ENCODE measurements at regions of chr1 and their contacts with region 1.

Region 1: DNA sequence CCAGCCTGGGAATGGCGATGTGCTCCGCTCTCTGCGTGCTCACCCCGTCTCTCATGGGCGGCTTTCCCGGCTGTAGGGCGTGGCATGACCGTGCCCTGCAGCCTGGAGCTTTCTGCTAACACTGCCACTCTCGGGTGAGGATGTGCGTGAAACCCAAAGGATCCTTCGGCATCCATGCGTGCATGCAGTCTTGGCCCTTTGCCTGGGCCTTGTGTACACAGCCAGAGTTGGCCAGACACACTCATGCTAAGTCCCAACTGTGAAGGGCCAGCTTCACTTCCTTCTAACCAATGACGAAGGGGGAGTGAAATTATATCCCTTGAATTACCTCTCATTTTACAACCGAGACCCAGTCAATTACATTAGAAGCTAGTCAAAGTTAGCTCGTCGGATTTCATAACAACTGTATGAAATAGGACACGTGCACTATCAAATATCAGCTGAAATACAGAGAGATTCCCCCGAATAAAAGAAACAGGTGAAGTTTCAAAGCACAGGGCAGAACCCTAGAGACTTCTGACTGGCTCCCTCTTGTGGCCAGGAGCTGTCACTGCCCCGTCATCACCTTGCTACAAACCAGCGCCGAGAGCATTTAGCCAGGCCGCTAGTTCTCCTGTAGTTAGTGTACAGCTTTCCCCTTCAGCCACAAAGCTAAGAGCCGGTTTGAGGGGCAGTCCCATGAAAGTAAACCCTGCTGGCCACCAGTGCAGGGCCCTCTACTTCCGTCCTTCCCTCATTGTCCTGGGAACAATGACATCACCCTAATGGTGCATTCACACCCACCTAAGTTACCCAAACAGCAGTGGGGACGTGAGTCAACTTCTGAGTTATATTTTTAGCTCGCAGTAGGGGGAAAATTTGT is 63.4 kb upstream of the COA6 start:
- DNase-seq: peak; percentile 37 to 46
- ATAC-seq: peak; percentile 87 to 90
- H3K4me3 ChIP-seq: peak overlapping the region; percentile 2 to 30 (median 22)
- H3K27ac ChIP-seq: no peak overlapping the region
- H3K4me1 ChIP-seq: peaks cover 4 to 6% of the 10 kb centered on the region in 2 donors
- H3K27me3 ChIP-seq: no peaks in the 10 kb centered on the region
- CTCF ChIP-seq: peak; percentile 64 to 87 (median 83)
- POLR2A ChIP-seq: no peak

Region 2: DNA sequence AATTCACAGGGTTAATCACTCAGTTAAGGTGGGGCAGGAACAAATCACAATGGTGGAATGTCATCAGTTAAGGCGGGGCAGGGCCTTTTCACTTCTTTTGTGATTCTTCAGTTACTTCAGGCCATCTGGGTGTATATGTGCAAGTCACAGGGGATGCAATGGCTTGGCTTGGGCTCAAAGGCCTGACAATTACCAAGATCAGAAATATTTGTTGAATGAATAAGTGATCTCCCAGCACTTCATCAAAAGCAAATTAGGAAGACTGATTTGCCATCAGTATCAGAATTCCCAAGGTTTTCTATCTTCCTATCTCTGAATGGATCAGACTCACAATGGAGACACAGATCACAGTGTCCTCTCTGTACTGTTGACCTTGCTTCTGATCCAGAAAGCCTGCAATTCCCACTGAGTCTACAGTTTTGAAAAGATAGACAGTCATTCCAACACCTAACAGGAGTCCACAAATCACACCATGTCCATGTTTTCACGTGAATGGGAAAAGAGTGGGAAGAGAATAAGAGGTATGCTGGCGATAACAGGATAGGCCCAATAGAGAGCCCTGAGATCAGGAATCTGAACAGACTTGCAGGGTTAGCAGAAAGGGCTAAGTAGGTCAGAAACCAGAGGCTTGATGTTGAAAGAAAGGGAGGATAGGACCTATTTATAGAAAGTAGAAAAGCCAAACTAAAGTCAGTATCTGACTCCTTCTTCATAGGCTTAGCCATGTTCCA is 620.6 kb before region 1 on chr1:
- in situ Hi-C with region 1: no loop called
- intact Hi-C with region 1: no loop called
- DNase-seq: no peak
- ATAC-seq: no peak
- H3K4me3 ChIP-seq: no peak overlapping the region
- H3K27ac ChIP-seq: no peak overlapping the region
- H3K4me1 ChIP-seq: no peaks in the 10 kb centered on the region
- H3K27me3 ChIP-seq: no peaks in the 10 kb centered on the region
- CTCF ChIP-seq: no peak
- POLR2A ChIP-seq: no peak

Region 3: GRCh38 chr1:234114648-234115307 is 195.1 kb before region 1 on chr1:
- in situ Hi-C with region 1: no loop called
- intact Hi-C with region 1: loop called (anchors 1 kb)
- DNase-seq: no peak
- ATAC-seq: peak in 1 of 2 donors; percentile 68
- H3K4me3 ChIP-seq: no peak overlapping the region
- H3K27ac ChIP-seq: no peak overlapping the region
- H3K4me1 ChIP-seq: no peaks in the 10 kb centered on the region
- H3K27me3 ChIP-seq: no peaks in the 10 kb centered on the region
- CTCF ChIP-seq: peak; percentile 25 to 59 (median 46)
- POLR2A ChIP-seq: no peak

Region 4: DNA sequence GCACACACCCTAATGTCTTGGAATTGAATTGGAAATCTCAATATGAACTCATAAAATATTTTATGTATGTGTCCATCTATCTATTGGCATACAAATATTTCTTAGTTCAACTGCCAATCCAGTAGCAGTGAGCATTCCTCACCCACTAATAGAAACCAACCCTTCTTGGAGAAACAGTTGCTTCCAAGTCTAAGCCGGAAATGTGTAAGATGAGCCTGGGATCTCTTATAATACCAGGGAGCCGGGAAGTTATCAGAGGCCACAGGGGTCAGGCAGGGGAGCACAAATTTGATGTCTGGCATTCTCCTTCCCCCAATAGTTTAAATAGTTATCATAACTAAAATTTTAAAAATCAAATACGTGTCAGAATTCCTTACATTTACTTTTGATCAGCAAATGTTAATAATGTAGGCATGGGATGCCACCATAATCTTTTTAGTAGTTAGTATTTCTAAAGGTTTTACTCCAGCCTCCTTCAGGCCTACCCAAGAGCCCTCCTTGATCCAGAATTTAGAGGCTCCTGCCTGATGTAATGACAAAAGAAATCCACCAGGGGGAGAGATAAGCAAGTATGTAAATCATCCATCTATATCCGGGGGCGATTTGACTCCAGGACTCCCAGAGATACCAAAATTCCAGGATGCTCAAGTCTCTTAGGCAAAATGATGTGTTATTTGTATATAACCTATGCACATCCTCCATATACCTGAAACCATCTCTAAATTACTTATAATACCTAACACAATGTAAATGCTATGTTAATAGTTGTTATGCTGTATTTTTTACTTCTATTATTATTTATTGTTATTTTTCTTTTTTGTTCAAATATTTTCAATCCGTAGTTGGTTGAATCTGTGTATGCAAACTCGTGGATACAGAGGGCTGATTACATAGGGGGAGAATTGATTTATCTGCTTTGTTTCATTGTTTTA is 155.2 kb before region 1 on chr1:
- in situ Hi-C with region 1: loop called (anchors 5 to 10 kb)
- intact Hi-C with region 1: loop called (anchors 1 kb)
- DNase-seq: no peak
- ATAC-seq: peak in 1 of 2 donors; percentile 74
- H3K4me3 ChIP-seq: no peak overlapping the region
- H3K27ac ChIP-seq: no peak overlapping the region
- H3K4me1 ChIP-seq: no peaks in the 10 kb centered on the region
- H3K27me3 ChIP-seq: no peaks in the 10 kb centered on the region
- CTCF ChIP-seq: peak; percentile 70 to 82 (median 80)
- POLR2A ChIP-seq: no peak

Region 5: DNA sequence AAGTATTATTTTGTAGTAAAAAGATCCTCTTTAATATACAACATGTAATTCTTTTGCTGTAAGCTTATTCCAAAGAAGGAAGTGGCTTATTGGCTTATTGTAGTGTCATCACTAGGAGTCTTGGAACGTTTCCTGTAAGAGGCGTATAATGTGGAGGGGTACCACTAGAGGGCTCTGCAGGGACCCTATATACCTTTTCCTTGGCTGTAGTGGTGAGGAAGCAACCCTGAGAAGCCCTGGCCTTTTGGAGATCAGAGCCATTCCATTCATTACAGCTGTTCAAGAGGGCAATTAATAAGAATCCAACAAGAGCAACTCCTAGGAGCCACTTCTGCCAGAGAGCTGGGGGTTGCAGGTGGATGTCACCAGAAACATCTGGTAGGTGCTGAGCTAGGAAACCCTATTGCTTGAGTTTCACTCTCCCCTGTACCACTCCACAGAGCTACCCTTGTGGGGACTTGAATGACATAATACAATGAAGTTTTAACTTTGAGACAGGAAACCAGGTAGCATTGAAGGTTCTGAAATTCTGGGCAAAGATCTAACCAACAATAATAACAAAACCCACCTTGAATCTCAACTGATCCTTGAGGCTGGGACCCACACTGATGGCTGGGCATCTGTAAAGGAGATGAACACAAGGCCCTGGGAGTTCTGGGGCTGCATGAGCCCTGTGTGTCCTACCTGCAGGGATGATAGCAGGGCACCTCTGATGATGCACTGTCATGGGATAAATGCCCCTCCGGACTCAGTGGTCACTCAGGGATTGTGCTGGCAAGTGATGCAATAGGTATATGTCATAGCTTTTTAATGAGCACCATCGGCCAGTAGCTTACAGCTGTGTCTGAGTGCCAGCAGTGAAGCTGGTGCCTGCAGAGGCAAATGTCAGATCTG is 96.8 kb before region 1 on chr1:
- in situ Hi-C with region 1: no loop called
- intact Hi-C with region 1: loop called (anchors 2 kb)
- DNase-seq: no peak
- ATAC-seq: peak; percentile 69 to 82
- H3K4me3 ChIP-seq: no peak overlapping the region
- H3K27ac ChIP-seq: no peak overlapping the region
- H3K4me1 ChIP-seq: peaks cover 0 to 5% of the 10 kb centered on the region in 2 donors
- H3K27me3 ChIP-seq: no peaks in the 10 kb centered on the region
- CTCF ChIP-seq: peak in 4 of 5 experiments; percentile 22 to 44 (median 34)
- POLR2A ChIP-seq: no peak

Measured in gastrocnemius medialis (tissue), 4 donors.